ENCODE measurements at regions of chr10 and their contacts with region 1.

Region 1: GRCh38 chr10:7417103-7417623 is 6.3 kb upstream of the SFMBT2 start:
- DNase-seq: peak; percentile 40
- ATAC-seq: no peak
- H3K4me3 ChIP-seq: no peak overlapping the region
- H3K27ac ChIP-seq: no peak overlapping the region
- H3K4me1 ChIP-seq: peaks cover 10% of the 10 kb centered on the region
- H3K27me3 ChIP-seq: peaks cover 3% of the 10 kb centered on the region
- CTCF ChIP-seq: peak; percentile 59

Region 2: GRCh38 chr10:6667679-6668270 is 749.4 kb before region 1 on chr10:
- CTCF ChIA-PET with region 1: no interaction called
- POLR2A ChIA-PET with region 1: no interaction called
- intact Hi-C with region 1: loop called (anchors 1 kb)
- DNase-seq: peak; percentile 43
- ATAC-seq: peak; percentile 59
- H3K4me3 ChIP-seq: no peak overlapping the region
- H3K27ac ChIP-seq: no peak overlapping the region
- H3K4me1 ChIP-seq: no peaks in the 10 kb centered on the region
- H3K27me3 ChIP-seq: peaks cover 8% of the 10 kb centered on the region; the same call in 1 of the 2 replicates
- CTCF ChIP-seq: peak; percentile 58; the same call in 1 of the 2 replicates

Region 3: GRCh38 chr10:6920072-6921019 is 496.8 kb before region 1 on chr10:
- CTCF ChIA-PET with region 1: no interaction called
- POLR2A ChIA-PET with region 1: no interaction called
- intact Hi-C with region 1: loop called (anchors 5 kb)
- DNase-seq: peak; percentile 38
- ATAC-seq: peak; percentile 64; the same call in 1 of the 2 replicates
- H3K4me3 ChIP-seq: no peak overlapping the region
- H3K27ac ChIP-seq: no peak overlapping the region
- H3K4me1 ChIP-seq: no peaks in the 10 kb centered on the region
- H3K27me3 ChIP-seq: no peaks in the 10 kb centered on the region
- CTCF ChIP-seq: peak; percentile 59

Region 4: DNA sequence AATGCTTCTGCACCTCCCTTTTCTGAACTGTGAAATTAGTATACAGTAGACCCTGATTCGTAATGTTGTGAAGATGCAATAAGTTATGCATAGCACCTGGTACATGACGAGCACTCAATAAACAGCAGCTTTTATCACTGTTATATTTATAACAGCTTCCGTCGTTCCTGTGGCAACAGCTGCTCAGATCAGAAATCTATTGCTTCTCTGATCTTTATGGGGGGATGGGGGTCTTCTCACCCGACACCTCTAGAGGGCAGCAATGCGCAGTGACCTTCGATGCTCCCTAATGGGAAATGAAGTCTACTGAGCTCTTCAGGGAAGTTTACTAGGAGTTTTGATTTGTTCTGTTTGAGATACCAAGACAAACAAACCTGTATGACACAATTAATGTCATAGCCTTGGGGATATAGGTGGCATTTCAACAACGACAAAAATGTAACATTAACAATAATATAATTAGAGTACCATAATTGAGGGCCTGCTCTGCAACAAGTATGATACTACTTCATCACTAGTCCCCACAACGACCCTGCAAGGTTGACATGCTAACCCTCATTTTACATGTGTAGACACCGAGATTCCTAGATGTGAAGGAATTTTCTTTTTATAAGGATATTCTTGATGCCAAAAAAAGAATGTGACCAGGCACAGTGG is 295.9 kb before region 1 on chr10:
- CTCF ChIA-PET with region 1: interaction called, 3 read pairs
- POLR2A ChIA-PET with region 1: no interaction called
- intact Hi-C with region 1: loop called (anchors 1 kb)
- DNase-seq: peak; percentile 51
- ATAC-seq: peak; percentile 42
- H3K4me3 ChIP-seq: no peak overlapping the region
- H3K27ac ChIP-seq: no peak overlapping the region
- H3K4me1 ChIP-seq: no peaks in the 10 kb centered on the region
- H3K27me3 ChIP-seq: no peaks in the 10 kb centered on the region
- CTCF ChIP-seq: peak; percentile 60